ENCODE measurements at regions of chr12 and their contacts with region 1.

Region 1: GRCh38 chr12:81644503-81644902 is 114.6 kb downstream of the PPFIA2 start:
- DNase-seq: no peak
- H3K4me3 Mint-ChIP-seq: no peak overlapping the region
- H3K27ac Mint-ChIP-seq: no peak overlapping the region
- H3K4me1 Mint-ChIP-seq: no peaks in the 10 kb centered on the region
- H3K27me3 Mint-ChIP-seq: no peaks in the 10 kb centered on the region

Region 2: DNA sequence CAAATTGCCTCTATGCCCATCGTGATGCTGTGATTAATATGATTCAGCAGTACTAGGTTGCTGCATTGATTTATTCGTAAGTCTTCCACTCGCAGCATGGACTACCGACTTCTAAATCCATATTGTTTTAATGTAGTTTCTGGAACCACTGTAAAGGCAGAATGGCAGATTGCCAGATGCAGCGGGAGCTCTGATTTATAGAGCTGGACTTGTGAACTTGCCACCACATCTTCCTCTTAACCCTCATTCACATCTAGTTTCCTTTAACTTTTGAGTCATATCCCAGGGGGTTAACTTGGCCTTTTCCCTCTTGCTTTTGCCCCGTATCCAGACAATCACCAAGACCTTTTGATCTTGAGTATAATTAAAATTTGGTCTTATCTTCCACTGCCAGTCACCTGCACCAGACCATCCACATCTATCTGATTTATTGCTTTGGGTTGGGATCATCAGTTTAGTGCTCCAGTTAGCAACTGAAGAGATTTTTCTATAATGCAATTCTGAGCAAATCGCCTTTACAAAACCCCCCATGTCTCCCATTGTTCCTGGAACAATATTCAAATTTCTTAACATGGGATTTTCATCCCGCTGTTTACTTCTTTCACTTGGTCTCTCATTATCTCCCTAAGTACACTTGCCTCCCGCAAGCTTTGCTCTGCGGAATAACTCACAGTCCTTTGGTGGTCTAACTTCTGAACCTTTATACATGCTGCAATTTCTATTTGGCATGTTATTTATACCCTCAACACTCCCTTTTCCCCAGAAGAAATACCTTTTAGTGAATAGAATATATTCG is 436.2 kb before region 1 on chr12:
- CTCF ChIA-PET with region 1: no interaction called
- DNase-seq: no peak
- H3K4me3 Mint-ChIP-seq: no peak overlapping the region
- H3K27ac Mint-ChIP-seq: no peak overlapping the region
- H3K4me1 Mint-ChIP-seq: no peaks in the 10 kb centered on the region
- H3K27me3 Mint-ChIP-seq: no peaks in the 10 kb centered on the region

Region 3: DNA sequence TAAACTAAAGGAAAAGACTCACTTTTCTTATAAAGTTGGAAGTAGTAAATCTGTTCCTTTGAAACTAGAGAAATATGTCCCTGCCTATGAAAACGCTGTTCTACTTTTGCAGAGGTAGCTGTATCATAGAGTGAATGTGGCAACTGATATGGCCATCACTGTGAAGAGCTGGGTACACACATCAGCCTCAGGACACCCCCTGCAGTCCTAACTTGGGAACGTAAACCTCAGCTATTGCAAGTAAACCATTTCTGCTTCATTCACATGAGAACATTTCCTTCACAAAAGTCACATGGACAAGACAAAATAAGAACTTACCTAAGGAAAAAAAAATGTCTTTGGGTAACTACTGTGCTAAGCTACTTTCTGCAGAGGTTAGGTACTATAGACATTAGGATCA is 348.0 kb after region 1 on chr12:
- CTCF ChIA-PET with region 1: interaction called, 14 read pairs
- DNase-seq: peak; percentile 65
- H3K4me3 Mint-ChIP-seq: no peak overlapping the region
- H3K27ac Mint-ChIP-seq: no peak overlapping the region
- H3K4me1 Mint-ChIP-seq: peaks cover 5% of the 10 kb centered on the region
- H3K27me3 Mint-ChIP-seq: no peaks in the 10 kb centered on the region

Measured in activated naive CD4-positive, alpha-beta T cell treated with anti-CD3 and anti-CD28 coated beads, Interleukin-2, amount 10 ng/mL, durations not matched to agents 7 days and 5 days (primary cell).